ENCODE measurements at regions of chr17 and their contacts with region 1.

Region 1: DNA sequence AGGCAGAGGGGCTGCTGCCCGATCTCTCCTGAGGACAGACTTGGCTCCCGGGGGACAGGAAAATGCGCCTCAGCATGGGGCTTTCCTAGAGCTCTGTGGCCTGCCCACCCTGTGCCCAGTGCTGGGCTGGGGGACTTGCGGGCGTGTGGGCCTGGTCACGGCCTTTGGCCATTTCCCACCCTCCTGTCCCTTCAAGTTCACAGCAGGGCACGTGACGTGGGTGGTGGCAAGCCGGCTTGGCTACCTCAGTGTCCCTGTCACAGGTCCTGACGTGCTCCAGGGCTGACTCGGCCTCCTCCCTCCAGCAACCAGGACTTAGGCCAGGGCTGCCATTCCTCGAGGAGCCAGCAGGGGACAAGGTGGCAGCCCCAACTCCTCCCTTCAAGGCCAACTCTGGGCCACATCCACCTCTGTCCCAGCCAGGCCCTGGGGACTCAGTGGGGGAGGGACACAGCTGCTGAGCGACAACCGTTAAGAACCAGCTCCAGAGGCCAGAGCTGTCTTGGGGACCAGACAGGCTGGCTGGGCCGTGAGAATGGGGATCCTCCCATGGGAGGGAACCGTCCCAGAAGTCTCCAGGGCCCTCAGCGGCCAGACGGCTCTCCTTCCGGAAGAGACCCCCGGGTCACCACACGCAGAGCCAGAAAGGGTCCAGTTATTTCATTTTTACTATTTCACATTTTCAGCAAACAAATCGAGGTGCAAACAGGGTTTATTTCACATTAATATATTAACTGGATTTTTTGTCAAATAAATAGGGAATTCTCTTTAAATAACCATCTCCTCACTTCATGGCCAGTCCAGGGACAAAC is 1.1 kb upstream of the UNC13D start:
- DNase-seq: peak; percentile 92

Region 2: DNA sequence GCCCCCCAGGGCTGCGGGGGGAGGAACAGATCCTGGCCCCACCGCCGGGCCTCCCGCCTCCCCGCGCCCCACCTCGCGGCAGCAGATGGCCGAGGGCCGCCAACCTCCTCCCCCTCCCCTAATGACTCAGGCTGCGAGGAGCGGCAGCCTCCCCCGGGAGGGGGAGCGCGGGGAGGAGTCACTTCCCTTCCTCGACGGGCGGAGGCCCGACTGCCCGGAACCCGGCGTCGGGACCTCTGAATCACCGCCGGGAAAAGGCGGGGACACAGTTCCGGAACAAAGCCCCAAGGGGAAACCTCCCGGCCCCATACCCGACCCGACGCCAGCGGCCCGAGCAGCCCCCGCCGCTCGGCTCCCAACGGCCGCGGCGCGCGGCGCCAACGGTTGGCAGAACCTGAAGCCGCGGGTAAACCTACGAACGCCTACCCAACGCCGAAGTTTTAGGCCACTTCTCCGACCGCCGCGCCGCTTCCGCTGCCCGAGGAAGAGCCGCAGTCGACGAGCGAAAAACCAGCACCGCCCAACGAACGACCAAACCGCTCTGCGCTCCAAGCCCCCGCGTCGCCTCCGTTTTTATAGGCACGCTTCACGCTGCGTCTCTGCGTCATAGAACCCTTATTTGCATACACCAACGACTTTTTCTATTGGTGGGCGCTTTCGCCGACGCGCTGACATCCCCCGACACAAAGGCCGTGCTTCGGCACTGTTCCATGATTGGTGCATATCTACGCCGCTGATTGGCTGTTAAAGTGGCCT is 65.8 kb before region 1 on chr17:
- intact Hi-C with region 1: loop called (anchors 2 kb)
- DNase-seq: peak; percentile 98

Region 3: GRCh38 chr17:75808905-75809715 is 36.1 kb before region 1 on chr17:
- intact Hi-C with region 1: loop called (anchors 2 kb)
- DNase-seq: peak; percentile 85

Measured in cardiac septum (tissue), 1 donor.